ENCODE measurements at regions of chr6 and their contacts with region 1.

Region 1: DNA sequence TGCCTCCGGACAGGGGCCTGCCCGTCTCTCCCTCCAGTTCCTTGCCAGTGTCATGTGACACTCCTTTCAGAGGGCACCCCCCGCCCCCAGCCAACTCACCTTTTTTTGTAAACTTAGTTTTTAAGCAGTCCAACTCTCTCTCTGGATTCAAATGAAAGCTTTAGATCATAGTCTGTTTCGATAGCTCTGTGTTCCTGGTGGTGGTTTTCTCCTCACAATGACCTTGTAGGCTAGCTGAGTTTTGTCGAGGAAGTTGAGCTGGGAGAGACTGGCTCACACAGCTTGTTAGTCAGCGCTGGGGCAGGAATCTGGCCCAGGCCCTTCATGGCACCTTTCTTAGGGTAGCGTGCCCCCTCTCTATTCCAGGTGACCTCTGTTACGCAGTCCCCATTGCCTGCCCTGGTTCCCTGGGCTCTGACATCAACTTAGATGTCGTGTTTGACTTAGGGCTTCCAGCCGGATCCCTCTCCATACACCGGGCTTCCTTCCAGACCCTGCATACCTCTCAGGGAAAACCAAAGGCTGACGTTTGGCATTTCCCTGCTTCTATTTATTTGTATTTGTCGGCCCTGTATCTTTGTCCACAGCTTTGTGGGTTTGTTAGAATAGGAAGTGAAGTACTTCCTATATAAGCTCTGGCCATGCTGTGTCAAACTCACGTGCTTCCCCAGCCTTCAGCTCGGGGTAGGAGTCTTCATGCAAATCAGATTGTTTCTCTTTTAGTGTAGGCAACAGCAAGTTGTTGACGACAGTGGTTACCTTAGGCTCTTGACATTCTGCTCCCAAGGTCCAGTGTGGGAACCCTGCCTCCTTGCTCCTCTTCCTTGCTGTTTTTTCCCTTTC is 12.7 kb downstream of the IGF2R start:
- DNase-seq: peak; percentile 85

Region 2: DNA sequence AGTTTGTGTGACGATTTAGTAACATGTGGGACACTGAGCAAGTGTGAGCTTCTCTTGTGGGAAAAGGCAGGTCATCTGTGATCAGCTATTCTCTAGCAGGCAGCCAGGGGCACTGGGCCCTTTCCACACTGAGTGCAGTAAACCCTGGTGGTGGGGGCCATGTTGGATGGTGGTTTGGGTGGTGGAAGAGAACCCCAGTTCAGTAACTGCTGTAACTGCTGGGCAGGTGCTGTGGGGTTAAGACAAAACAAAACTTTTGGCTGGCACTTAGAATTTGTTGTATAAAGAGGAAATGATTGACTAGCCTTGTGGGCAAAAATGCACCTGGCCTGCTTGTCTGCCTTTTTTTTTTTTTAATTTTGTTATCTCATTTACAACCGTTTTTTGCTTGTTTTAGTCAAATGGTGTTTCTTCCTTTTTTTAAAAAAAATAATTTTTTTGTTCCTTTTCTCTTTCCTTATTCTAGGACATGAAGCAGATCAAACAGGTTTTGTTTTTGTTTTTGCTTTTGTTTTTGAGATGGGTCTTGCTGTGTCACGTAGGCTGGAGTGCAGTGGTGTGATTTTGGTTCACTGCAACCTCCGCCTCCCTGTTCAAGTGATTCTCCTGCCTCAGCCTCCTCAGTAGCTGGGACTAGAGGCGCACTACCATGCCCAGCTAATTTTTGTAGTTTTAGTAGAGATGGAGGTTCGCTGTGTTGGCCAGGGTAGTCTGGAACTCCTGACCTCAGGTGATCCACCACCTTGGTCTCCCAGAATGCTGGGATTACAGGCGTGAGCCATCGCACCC is 47.1 kb after region 1 on chr6:
- intact Hi-C with region 1: loop called (anchors 5 kb)
- DNase-seq: no peak

Measured in cardiac septum (tissue), 1 donor.